ENCODE measurements at regions of chr3 and their contacts with region 1.

Region 1: DNA sequence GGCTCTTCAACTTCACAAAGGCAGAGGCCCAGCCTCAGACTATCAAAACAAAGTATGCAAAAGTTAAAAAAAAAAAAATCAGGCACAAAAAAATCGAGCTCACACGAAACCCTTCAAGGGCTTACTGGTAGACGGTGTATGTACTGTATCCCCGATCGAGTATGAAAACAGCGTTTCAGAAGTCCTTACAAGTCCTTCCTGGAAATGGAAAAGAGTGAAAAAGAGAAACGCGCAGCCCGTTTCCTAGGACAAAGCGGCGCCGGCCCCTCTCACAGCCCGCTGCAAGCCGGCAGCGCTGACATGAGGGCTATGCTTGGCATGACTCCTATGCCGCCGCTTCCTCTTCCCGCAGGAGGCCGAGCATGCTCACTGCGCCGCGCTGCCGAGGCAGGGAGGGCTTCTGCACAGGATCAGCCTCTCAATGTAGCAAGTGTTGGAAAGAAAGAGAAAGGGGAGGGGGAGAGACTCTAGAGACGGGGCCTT is at the start of gene VGLL4:
- DNase-seq: peak; percentile 36 to 65 (median 47)
- H3K4me3 ChIP-seq: peak within 1 kb of the TSS; percentile 90
- H3K4me3 Mint-ChIP-seq: peak within 1 kb of the TSS; percentile 95 to 100 (median 97)
- H3K27ac ChIP-seq: peak within 1 kb of the TSS; percentile 93
- H3K27ac Mint-ChIP-seq: peak within 1 kb of the TSS; percentile 91 to 100 (median 97)
- H3K4me1 ChIP-seq: peaks cover 28% of the 10 kb centered on the region
- H3K4me1 Mint-ChIP-seq: peaks cover 31 to 42% (median 41%) of the 10 kb centered on the region in 3 donors
- H3K27me3 ChIP-seq: no peaks in the 10 kb centered on the region
- H3K27me3 Mint-ChIP-seq: peaks cover 0 to 3% of the 10 kb centered on the region in 2 donors
- total RNA-seq, gene VGLL4: 37.7 to 40.5 TPM

Region 2: GRCh38 chr3:11582191-11582968 is 61.3 kb before region 1 on chr3:
- CTCF ChIA-PET with region 1: no interaction called
- POLR2A ChIA-PET with region 1: no interaction called
- DNase-seq: no peak
- H3K4me3 ChIP-seq: no peak overlapping the region
- H3K4me3 Mint-ChIP-seq: peak overlapping the region in 1 of 7 donors; percentile 19
- H3K27ac ChIP-seq: no peak overlapping the region
- H3K27ac Mint-ChIP-seq: peak overlapping the region in 5 of 8 donors; percentile 2 to 69 (median 35)
- H3K4me1 ChIP-seq: peaks cover 18% of the 10 kb centered on the region
- H3K4me1 Mint-ChIP-seq: peaks cover 63 to 82% (median 76%) of the 10 kb centered on the region in 3 donors
- H3K27me3 ChIP-seq: no peaks in the 10 kb centered on the region
- H3K27me3 Mint-ChIP-seq: no peaks in the 10 kb centered on the region

Region 3: GRCh38 chr3:11600501-11601282 is 43.0 kb before region 1 on chr3:
- CTCF ChIA-PET with region 1: no interaction called
- POLR2A ChIA-PET with region 1: no interaction called
- DNase-seq: no peak
- H3K4me3 ChIP-seq: no peak overlapping the region
- H3K4me3 Mint-ChIP-seq: no peak overlapping the region
- H3K27ac ChIP-seq: no peak overlapping the region
- H3K27ac Mint-ChIP-seq: peak overlapping the region in 1 of 8 donors; percentile 63
- H3K4me1 ChIP-seq: no peaks in the 10 kb centered on the region
- H3K4me1 Mint-ChIP-seq: peaks cover 26 to 52% (median 41%) of the 10 kb centered on the region in 3 donors
- H3K27me3 ChIP-seq: no peaks in the 10 kb centered on the region
- H3K27me3 Mint-ChIP-seq: no peaks in the 10 kb centered on the region

Region 4: GRCh38 chr3:11690863-11691767 is 47.5 kb after region 1 on chr3:
- CTCF ChIA-PET with region 1: no interaction called
- POLR2A ChIA-PET with region 1: no interaction called
- DNase-seq: no peak
- H3K4me3 ChIP-seq: no peak overlapping the region
- H3K4me3 Mint-ChIP-seq: no peak overlapping the region
- H3K27ac ChIP-seq: no peak overlapping the region
- H3K27ac Mint-ChIP-seq: no peak overlapping the region
- H3K4me1 ChIP-seq: no peaks in the 10 kb centered on the region
- H3K4me1 Mint-ChIP-seq: peaks cover 0 to 6% (median 0%) of the 10 kb centered on the region in 3 donors
- H3K27me3 ChIP-seq: no peaks in the 10 kb centered on the region
- H3K27me3 Mint-ChIP-seq: peaks cover 0 to 2% of the 10 kb centered on the region in 2 donors

Region 5: GRCh38 chr3:11719406-11720230 is 76.0 kb after region 1 on chr3:
- CTCF ChIA-PET with region 1: no interaction called
- POLR2A ChIA-PET with region 1: interaction called, 12 read pairs
- DNase-seq: peak; percentile 71 to 88 (median 73)
- H3K4me3 ChIP-seq: peak overlapping the region; percentile 46
- H3K4me3 Mint-ChIP-seq: peak overlapping the region; percentile 69 to 98 (median 93)
- H3K27ac ChIP-seq: peak overlapping the region; percentile 28
- H3K27ac Mint-ChIP-seq: peak overlapping the region in 1 of 8 donors; percentile 40
- H3K4me1 ChIP-seq: peaks cover 5% of the 10 kb centered on the region
- H3K4me1 Mint-ChIP-seq: peaks cover 23 to 51% (median 34%) of the 10 kb centered on the region in 3 donors
- H3K27me3 ChIP-seq: no peaks in the 10 kb centered on the region
- H3K27me3 Mint-ChIP-seq: peaks cover 0 to 2% of the 10 kb centered on the region in 2 donors